ENCODE measurements at regions of chr5 and their contacts with region 1.

Region 1: GRCh38 chr5:140157032-140157803 is 17.8 kb upstream of the CYSTM1 start:
- DNase-seq: peak; percentile 80

Region 2: DNA sequence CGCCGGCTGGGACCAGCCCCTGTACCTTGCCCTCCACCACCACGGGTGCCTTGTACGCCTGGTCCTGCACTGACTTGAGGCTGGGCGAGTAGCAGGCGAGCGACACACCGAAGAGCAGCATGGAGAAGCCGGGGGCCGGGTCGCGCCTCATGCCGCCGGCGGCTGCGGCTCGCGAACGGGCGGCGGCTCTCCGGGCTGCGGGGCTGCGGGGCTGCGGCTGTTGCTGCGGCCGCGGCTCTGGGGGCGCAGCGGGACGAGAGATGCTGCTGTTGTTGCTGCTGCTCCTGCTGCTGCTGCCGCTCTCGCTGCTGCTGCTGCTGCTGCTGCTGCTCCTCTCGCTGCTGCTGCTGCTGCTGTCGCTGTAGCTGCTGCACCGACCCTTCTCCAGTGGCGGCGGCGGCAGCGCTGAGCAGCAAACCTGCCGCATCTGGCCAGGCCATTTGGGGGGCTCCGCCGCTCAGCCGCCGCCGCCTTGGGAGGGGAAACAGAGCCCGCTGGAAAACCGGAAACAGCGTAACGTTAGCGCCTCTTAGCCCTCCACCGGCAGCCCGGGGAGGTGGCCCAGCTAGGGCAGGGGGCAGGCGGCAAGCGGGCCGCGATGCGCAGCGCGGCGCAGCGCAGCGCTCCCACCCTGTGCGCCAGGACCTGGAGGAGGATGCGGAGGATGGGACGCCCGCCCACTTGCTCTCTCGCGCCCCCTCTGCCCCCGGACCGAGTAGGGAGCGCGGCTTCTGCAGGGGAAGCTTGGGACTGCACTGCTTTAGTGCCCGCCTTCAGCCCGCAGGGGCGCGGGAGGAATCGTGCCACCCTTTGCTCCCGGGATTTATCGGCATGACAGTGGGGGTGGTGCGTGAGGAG is 114.3 kb before region 1 on chr5 and contains the start of gene NRG2:
- in situ Hi-C with region 1: no loop called
- DNase-seq: peak; percentile 88
- total RNA-seq, gene NRG2: 0.96 and 6.8 TPM in 2 replicates

Region 3: DNA sequence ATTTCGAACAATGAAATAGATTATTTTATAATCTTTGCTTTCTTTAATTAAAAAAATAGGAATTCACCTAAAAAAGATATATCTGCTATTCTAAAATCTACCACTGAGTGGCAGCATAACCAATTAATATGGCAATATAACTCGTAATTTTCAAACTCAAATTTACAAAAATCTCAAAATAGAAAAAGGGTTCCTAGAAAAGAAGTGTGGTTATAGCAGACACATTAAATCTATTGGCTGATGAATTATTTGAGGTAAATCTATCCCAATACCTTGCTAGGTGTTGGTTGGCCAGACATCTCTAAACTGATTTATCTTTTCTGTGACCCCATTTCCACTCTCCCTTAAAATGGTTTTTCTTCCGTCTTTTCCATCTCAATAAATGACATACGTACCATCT is 83.9 kb before region 1 on chr5:
- in situ Hi-C with region 1: loop called (anchors 25 kb)
- DNase-seq: no peak